Mammary epithelial cell (primary cell): ENCODE measurements at regions of chr20 and their contacts with region 1.

Region 1: GRCh38 chr20:23889775-23890211 is 10.2 kb upstream of the CST5 start:
- DNase-seq: peak; percentile 71
- H3K4me3 ChIP-seq: no peak overlapping the region
- H3K27ac ChIP-seq: no peak overlapping the region
- H3K4me1 ChIP-seq: no peaks in the 10 kb centered on the region
- H3K27me3 ChIP-seq: peaks cover 2% of the 10 kb centered on the region
- CTCF ChIP-seq: peak; percentile 44 to 79

Region 2: GRCh38 chr20:23679133-23680092 is 210.4 kb before region 1 on chr20:
- CTCF ChIA-PET with region 1: no interaction called
- dilution Hi-C with region 1: no loop called
- in situ Hi-C with region 1: no loop called
- intact Hi-C with region 1: loop called (anchors 10 kb)
- DNase-seq: peak; percentile 14
- H3K4me3 ChIP-seq: no peak overlapping the region
- H3K27ac ChIP-seq: no peak overlapping the region
- H3K4me1 ChIP-seq: peaks cover 5% of the 10 kb centered on the region
- H3K27me3 ChIP-seq: peaks cover 2% of the 10 kb centered on the region
- CTCF ChIP-seq: no peak

Region 3: DNA sequence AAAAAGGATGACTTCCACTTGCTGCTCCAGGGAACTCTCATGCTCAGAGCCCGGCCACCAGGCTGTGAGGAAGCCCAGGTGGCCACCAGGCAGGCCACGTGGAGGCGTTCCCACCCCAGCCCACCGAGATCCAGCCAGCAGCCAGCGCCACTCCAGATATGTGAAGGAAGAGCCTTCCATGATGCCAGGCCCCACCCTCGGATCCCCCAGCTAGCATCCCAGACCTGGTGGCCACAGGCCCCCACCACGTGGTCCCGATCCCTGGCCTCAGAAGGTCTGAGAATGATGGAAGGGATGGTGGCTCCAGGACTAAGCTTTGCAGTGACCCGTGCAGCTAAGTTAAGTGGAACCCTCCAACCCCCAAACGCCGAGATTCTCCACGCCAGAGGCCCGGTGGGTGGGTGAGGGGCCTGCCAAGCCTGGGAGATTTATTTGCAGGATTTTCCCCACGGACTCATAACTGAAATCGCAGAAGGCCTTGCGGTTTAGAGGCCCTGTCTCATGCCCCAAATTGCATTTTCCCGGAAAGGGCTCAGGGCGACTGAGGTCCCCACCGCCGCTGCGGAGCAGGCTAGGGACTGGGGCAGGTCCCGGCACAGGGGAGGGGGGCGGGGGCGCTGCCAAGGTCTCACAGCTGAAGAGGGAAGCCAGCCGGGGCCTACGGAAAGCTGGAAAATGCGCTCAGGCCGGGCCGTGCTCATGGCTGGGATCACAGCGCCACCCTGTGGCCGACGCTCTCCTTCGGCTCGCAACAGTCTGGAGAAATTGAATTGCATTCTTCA is 1028.2 kb after region 1 on chr20:
- CTCF ChIA-PET with region 1: no interaction called
- dilution Hi-C with region 1: no loop called
- in situ Hi-C with region 1: no loop called
- intact Hi-C with region 1: loop called (anchors 1 kb)
- DNase-seq: peak; percentile 33
- H3K4me3 ChIP-seq: no peak overlapping the region
- H3K27ac ChIP-seq: no peak overlapping the region
- H3K4me1 ChIP-seq: no peaks in the 10 kb centered on the region
- H3K27me3 ChIP-seq: no peaks in the 10 kb centered on the region
- CTCF ChIP-seq: peak; percentile 75 to 88